Right cardiac atrium (tissue), 5 donors: ENCODE measurements at regions of chr3 and their contacts with region 1.

Region 1: GRCh38 chr3:16130066-16130465 is 44.4 kb upstream of the GALNT15 start:
- DNase-seq: peak in 2 of 3 donors; percentile 59 to 73
- ATAC-seq: peak; percentile 53 to 58
- H3K4me3 ChIP-seq: no peak overlapping the region
- H3K27ac ChIP-seq: peak overlapping the region; percentile 26
- H3K4me1 ChIP-seq: peaks cover 12% of the 10 kb centered on the region
- H3K27me3 ChIP-seq: no peaks in the 10 kb centered on the region

Region 2: GRCh38 chr3:15591242-15591641 is 538.8 kb before region 1 on chr3:
- intact Hi-C with region 1: no loop called
- DNase-seq: no peak
- ATAC-seq: no peak
- H3K4me3 ChIP-seq: no peak overlapping the region
- H3K27ac ChIP-seq: no peak overlapping the region
- H3K4me1 ChIP-seq: no peaks in the 10 kb centered on the region
- H3K27me3 ChIP-seq: no peaks in the 10 kb centered on the region

Region 3: DNA sequence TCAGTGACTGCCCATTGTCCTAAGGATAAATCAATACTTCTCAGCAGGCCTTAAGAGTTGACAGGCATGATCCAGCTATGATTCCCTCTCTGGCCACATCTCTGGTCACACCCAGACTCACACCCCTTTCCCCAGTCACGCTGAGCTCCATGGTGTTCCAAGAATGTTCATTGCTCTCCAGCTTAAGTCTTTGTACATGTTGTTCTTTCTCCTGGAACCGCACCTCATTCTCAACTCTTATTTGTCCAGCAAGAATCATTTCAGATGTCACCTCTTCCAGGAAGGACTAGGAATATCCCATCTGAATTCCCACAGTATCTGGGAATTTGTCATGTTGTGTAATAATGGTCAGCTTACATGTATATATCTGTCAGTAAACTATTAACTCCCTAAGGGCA is 73.9 kb before region 1 on chr3:
- intact Hi-C with region 1: loop called in 1 of 4 experiments (anchors 10 kb)
- DNase-seq: peak in 1 of 3 donors; percentile 69
- ATAC-seq: peak in 1 of 2 donors; percentile 65
- H3K4me3 ChIP-seq: no peak overlapping the region
- H3K27ac ChIP-seq: peak overlapping the region; percentile 86
- H3K4me1 ChIP-seq: peaks cover 13% of the 10 kb centered on the region
- H3K27me3 ChIP-seq: no peaks in the 10 kb centered on the region

Region 4: GRCh38 chr3:16069149-16069922 is 60.7 kb before region 1 on chr3:
- intact Hi-C with region 1: no loop called
- DNase-seq: no peak
- ATAC-seq: no peak
- H3K4me3 ChIP-seq: no peak overlapping the region
- H3K27ac ChIP-seq: no peak overlapping the region
- H3K4me1 ChIP-seq: no peaks in the 10 kb centered on the region
- H3K27me3 ChIP-seq: no peaks in the 10 kb centered on the region